ENCODE measurements at regions of chr7 and their contacts with region 1.

Region 1: GRCh38 chr7:70856866-70857630 is 274.9 kb upstream of the GALNT17 start:
- DNase-seq: peak; percentile 46 to 65
- ATAC-seq: no peak
- H3K4me3 ChIP-seq: no peak overlapping the region
- H3K27ac ChIP-seq: no peak overlapping the region
- H3K4me1 ChIP-seq: no peaks in the 10 kb centered on the region
- H3K27me3 ChIP-seq: peaks cover 0 to 12% (median 0%) of the 10 kb centered on the region in 7 donors
- CTCF ChIP-seq: peak; percentile 80 to 97 (median 89)

Region 2: GRCh38 chr7:70415179-70415972 is 441.7 kb before region 1 on chr7:
- intact Hi-C with region 1: no loop called
- DNase-seq: no peak
- ATAC-seq: no peak
- H3K4me3 ChIP-seq: no peak overlapping the region
- H3K27ac ChIP-seq: no peak overlapping the region
- H3K4me1 ChIP-seq: no peaks in the 10 kb centered on the region
- H3K27me3 ChIP-seq: no peaks in the 10 kb centered on the region
- CTCF ChIP-seq: no peak

Region 3: GRCh38 chr7:70907259-70908247 is 50.5 kb after region 1 on chr7:
- intact Hi-C with region 1: no loop called
- DNase-seq: no peak
- ATAC-seq: no peak
- H3K4me3 ChIP-seq: no peak overlapping the region
- H3K27ac ChIP-seq: no peak overlapping the region
- H3K4me1 ChIP-seq: no peaks in the 10 kb centered on the region
- H3K27me3 ChIP-seq: peaks cover 0 to 6% (median 0%) of the 10 kb centered on the region in 7 donors
- CTCF ChIP-seq: no peak

Region 4: GRCh38 chr7:70935854-70936253 is 78.8 kb after region 1 on chr7:
- intact Hi-C with region 1: no loop called
- DNase-seq: no peak
- ATAC-seq: no peak
- H3K4me3 ChIP-seq: no peak overlapping the region
- H3K27ac ChIP-seq: no peak overlapping the region
- H3K4me1 ChIP-seq: no peaks in the 10 kb centered on the region
- H3K27me3 ChIP-seq: peaks cover 0 to 15% (median 0%) of the 10 kb centered on the region in 7 donors
- CTCF ChIP-seq: no peak

Region 5: DNA sequence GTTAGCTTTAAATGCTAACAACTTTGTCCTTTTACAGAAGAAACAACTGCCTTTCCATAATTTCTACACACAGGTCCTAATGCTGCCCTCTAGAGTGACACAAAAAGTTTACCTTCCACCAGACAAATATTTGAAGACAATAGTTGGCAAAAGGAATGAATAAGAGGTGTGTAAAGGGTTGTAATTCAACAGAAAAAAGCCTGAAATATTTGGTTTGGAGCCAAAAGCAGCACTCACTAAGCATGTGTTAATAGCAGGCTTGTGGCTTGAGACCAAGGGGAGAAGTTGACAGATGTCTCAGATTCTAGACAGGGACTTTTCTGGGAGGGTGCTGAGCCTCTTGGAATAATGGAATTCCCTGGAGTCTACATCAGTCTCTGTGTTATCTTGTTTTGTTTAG is 118.7 kb after region 1 on chr7:
- intact Hi-C with region 1: no loop called
- DNase-seq: no peak
- ATAC-seq: no peak
- H3K4me3 ChIP-seq: no peak overlapping the region
- H3K27ac ChIP-seq: no peak overlapping the region
- H3K4me1 ChIP-seq: no peaks in the 10 kb centered on the region
- H3K27me3 ChIP-seq: no peaks in the 10 kb centered on the region
- CTCF ChIP-seq: no peak

Region 6: DNA sequence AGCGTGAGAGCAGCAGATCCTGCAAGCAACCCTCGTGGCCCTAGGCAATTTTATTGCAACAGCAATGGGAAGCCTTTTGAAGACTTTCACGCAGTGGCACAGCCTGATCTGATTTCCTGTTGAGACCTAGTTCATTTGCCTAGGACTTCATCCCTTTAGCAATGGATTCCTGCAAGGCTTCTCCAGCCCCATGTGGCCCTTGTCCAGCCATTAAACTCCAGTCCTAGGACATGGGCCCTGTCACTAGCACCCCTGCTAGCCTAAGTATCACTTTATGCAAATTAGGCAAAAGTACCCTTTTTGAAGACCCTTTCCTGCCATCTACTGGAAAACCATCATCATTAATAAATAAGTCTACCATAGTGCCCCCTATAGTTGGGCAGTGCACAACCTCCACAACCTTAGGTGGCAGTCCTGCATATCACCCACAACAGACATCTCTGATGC is 654.3 kb after region 1 on chr7:
- intact Hi-C with region 1: loop called in 2 of 10 experiments (anchors 10 kb)
- DNase-seq: no peak
- ATAC-seq: no peak
- H3K4me3 ChIP-seq: no peak overlapping the region
- H3K27ac ChIP-seq: no peak overlapping the region
- H3K4me1 ChIP-seq: no peaks in the 10 kb centered on the region
- H3K27me3 ChIP-seq: no peaks in the 10 kb centered on the region
- CTCF ChIP-seq: peak in 4 of 9 donors; percentile 5 to 18 (median 11)

Measured in heart right ventricle (tissue), 16 donors.